ENCODE measurements at regions of chr12 and their contacts with region 1.

Region 1: GRCh38 chr12:123580772-123581171 is 3.6 kb upstream of the TMED2 start:
- DNase-seq: no peak
- H3K4me3 ChIP-seq: no peak overlapping the region
- H3K27ac ChIP-seq: no peak overlapping the region
- H3K4me1 ChIP-seq: peaks cover 4 to 22% (median 17%) of the 10 kb centered on the region in 4 experiments
- H3K27me3 ChIP-seq: no peaks in the 10 kb centered on the region

Region 2: DNA sequence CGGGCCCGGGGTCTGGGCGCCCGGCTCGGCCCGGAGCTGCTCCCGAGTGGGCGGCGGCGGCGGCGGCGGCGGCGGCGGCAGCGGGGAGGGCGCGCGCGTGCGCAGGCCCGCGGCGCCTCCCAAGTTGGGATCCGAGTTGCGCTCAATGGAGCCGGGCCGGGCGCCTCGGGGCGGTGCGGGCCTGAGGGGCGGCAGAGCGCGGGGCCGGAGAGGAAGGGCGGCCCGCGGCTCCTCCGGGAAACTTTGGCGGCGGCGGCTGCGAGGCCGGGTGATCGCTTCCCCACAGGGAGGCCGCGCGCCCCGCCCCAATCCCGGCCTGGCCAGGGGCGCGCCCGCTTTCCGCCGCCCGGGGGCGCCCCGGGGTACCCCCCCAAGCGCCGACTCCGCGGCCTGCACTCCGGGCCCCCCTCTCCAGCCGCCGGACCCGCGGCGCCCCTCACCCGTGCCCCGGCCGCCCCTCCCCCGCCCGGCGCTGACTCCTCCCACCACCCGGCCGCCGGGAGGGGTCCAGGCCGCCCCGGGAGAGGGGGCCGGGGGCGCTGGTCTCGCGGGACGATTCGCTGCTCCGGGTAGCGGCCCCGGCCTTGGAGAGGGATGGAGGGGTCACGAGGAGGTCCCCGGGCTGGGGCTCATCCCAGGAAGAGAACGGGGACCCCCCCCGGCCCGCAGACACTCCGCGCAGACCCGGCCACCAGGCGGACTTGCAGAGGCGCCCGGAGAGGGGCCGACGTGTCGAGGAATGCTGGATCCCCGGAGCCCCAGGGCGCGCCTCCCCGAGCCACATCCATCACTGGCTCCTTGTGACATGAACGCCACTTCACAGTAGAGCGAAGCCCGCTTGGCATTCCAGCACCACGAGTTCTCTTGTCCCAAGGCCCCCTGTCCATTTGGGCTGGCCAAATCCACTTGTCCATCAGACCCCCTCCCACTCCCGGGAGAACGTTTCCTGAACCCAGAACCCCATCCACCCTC is 46.8 kb before region 1 on chr12 and contains the start of gene RILPL1:
- CTCF ChIA-PET with region 1: interaction called, 12 read pairs
- POLR2A ChIA-PET with region 1: no interaction called
- DNase-seq: peak; percentile 39 to 55 (median 39)
- H3K4me3 ChIP-seq: peak within 1 kb of the TSS; percentile 27 to 77 (median 63)
- H3K27ac ChIP-seq: no peak within 1 kb of the TSS
- H3K4me1 ChIP-seq: peaks cover 4 to 28% (median 24%) of the 10 kb centered on the region in 4 experiments
- H3K27me3 ChIP-seq: peaks cover 0 to 14% (median 6%) of the 10 kb centered on the region in 5 experiments

Region 3: DNA sequence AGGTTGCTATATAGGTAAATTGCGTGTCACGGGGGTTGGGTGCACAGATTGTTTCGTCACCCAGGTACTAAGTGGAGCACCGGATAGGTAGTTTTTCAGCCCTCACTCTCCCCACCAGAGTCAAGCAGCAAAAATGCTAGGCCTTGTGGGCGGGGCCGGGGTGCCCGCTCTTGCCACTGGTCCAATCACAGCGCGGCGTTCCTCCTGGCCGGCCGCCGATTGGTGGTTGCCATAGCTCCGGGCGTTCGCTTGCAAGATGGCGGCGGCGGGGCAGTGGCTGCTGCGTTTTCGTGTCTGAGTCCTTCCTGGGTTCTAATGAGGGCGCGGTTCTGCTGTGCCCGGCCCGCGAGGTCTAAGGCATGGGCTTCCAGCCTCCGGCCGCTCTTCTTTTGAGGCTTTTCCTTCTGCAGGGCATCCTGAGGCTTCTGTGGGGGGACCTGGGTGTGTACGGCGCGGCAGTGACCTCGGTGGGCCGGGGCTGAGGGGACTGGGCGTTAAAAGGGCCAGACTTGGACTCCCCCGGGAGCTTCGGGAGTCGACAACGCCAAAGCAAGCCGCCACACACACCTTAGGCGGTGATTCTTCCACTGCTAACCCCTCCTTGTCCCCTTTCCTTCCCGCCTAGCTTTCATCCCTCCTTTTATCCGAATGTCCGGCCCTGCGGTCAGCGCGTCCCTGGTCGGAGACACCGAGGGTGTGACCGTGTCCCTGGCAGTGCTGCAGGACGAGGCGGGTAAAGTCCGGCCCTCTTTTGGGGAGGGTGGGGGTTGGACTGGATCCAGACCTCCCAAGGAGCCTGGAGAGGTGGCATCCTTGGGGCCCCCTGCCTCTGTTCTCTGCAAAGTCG is 90.3 kb after region 1 on chr12 and contains the start of gene TCTN2:
- CTCF ChIA-PET with region 1: no interaction called
- POLR2A ChIA-PET with region 1: no interaction called
- DNase-seq: peak; percentile 89 to 93 (median 91)
- H3K4me3 ChIP-seq: peak within 1 kb of the TSS; percentile 88 to 97 (median 91)
- H3K27ac ChIP-seq: peak within 1 kb of the TSS; percentile 17 to 64
- H3K4me1 ChIP-seq: peaks cover 4 to 16% (median 10%) of the 10 kb centered on the region in 4 experiments
- H3K27me3 ChIP-seq: no peaks in the 10 kb centered on the region

Measured in common myeloid progenitor, CD34-positive (primary cell).